ENCODE measurements at regions of chr9 and their contacts with region 1.

Region 1: GRCh38 chr9:37422289-37423104 is at the start of gene GRHPR:
- DNase-seq: peak; percentile 98
- total RNA-seq, gene GRHPR: 102 TPM

Region 2: GRCh38 chr9:36765468-36766341 is 656.8 kb before region 1 on chr9:
- intact Hi-C with region 1: no loop called
- DNase-seq: peak; percentile 79

Region 3: DNA sequence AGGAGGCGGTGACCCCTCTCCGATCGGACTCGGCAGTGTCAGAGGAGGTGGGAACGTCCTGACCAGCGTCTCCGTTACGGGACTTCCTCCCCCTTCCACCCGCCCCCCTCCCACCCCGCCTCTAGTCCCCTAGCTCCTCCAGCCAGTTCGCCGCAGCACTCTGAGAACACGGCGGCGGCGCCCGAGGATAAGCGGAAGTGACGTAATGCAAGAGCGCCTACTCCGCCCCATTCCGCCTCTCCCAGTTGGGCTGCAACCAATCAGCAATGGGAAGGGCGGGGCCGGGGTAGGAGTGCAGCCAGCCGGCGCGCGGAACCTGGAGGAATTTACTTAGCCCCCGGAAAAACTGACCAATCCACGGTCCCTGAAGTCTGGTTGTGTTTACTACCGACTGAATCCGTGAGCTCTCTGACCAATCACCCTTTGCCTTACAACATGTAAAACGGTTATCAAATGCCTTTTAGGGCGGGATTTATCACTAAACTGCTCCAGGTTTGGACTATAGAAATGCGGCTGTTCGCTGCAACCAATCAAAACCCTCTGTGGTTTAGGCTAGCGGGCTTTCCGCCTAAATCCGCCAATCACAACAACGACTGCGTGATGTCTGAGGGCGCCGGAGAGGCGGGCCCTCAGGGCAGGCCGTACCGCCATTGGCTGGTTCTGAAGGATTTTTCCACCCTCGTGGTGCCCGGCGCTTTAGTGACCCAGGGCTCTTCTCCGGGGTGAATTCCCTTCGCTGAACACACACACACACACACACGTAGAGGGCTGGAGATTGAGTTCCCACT is 42.9 kb after region 1 on chr9 and contains the start of gene ZBTB5:
- intact Hi-C with region 1: loop called (anchors 5 kb)
- DNase-seq: peak; percentile 99
- total RNA-seq, gene ZBTB5: 7.2 TPM

Region 4: GRCh38 chr9:37575921-37576721 is 153.6 kb after region 1 on chr9 and contains the start of gene FBXO10:
- intact Hi-C with region 1: loop called (anchors 10 kb)
- DNase-seq: peak; percentile 87
- total RNA-seq, gene FBXO10: 5.9 TPM

Region 5: GRCh38 chr9:37611961-37612360 is 189.5 kb after region 1 on chr9:
- intact Hi-C with region 1: no loop called
- DNase-seq: no peak

Region 6: DNA sequence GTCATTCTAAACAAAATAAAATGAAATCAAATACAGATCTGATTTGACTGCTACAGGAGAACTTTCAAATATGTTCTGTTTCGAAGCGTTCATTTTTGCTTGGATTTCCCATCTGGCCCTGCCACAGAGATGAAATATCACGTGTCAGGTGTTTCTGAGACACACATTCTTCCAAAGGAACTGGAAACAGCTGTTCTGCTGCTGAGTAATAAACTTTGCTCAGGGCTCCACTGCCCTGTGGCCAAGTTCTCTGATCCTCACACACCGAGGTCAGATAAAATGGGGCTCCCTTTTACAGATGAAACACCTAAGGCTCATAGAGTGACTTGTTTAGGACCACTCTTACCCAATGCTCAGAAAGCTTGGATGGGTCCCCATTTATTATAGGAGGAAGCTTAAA is 270.8 kb after region 1 on chr9:
- intact Hi-C with region 1: no loop called
- DNase-seq: no peak

Region 7: DNA sequence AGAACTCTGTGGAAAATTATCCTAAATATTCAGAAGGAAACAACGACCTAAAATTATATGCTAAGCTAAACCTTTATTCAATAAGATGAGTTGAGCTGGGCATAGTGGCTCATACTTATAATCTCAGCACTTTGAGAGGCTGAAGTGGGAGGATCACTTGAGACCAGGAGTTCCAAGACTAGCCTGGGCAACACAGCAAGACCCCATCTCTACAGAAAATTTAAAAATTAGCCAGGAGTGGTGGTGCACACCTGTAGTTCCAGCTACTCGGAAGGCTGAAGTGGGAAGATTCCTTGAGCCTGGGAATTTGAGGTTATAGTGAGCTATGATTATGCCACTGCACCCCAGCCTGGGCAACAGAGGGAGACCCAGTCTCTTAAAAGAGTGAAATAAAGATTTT is 429.7 kb after region 1 on chr9:
- intact Hi-C with region 1: no loop called
- DNase-seq: no peak